Psoas muscle (tissue), 8 donors: ENCODE measurements at regions of chr3 and their contacts with region 1.

Region 1: DNA sequence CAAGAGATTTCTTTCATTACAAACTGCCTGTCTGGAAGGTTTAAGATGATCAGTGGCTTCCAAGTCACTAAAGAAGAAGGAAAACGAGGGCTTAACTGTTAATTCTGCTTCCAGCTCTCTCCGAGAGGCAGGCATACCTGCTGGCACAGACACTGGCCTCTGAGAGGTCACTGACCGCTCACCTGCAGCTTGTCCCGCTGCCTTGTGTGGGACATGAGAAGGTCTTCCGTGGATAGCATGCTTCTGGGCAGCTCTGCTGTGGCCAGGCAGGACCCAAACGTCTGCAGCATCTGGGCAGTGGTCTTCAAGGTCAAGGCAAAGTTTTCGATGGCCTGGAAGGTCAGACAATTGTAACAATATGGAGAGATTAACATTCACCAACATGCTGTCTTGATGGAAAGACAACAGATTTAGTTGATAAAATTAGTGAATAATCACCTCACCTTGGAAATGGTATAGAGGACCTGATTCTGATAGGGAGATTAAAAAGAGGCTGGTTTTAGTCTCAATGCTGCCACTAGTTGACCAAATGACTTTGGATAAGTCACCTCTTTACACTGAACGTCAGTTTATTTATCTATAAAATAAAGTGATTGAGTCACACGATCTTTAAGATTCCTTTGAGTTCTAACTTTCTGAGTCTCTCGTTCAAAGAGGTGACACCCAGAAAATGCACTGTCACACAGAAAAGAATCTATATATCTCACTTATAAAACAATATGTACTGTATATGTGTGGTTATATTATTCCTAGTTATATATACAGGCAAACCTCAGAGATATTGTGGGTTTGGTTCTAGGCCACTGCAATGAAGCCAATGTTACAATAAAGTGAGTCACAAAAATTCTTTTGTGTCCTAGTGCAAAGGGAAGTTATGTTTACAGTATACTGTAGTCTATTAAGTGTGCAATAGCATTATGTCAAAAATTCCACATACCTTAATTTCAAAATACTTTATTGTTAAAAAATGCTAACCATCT is 65.1 kb downstream of the B3GNT5 start:
- DNase-seq: no peak
- ATAC-seq: no peak
- H3K4me3 ChIP-seq: no peak overlapping the region
- H3K27ac ChIP-seq: no peak overlapping the region
- H3K4me1 ChIP-seq: no peaks in the 10 kb centered on the region
- H3K27me3 ChIP-seq: no peaks in the 10 kb centered on the region
- CTCF ChIP-seq: no peak

Region 2: GRCh38 chr3:183369117-183369516 is 50.9 kb after region 1 on chr3:
- intact Hi-C with region 1: loop called in 1 of 2 experiments (anchors 5 kb)
- DNase-seq: no peak
- ATAC-seq: no peak
- H3K4me3 ChIP-seq: no peak overlapping the region
- H3K27ac ChIP-seq: no peak overlapping the region
- H3K4me1 ChIP-seq: peaks cover 7% of the 10 kb centered on the region
- H3K27me3 ChIP-seq: no peaks in the 10 kb centered on the region
- CTCF ChIP-seq: no peak